ENCODE measurements at regions of chr12 and their contacts with region 1.

Region 1: GRCh38 chr12:50038336-50038735 is 13.0 kb upstream of the RACGAP1 start:
- DNase-seq: no peak
- ATAC-seq: no peak
- H3K4me3 ChIP-seq: no peak overlapping the region
- H3K27ac ChIP-seq: no peak overlapping the region
- H3K4me1 ChIP-seq: no peaks in the 10 kb centered on the region
- H3K27me3 ChIP-seq: no peaks in the 10 kb centered on the region
- CTCF ChIP-seq: no peak

Region 2: GRCh38 chr12:49961993-49962921 is 76.1 kb before region 1 on chr12:
- CTCF ChIA-PET with region 1: no interaction called
- POLR2A ChIA-PET with region 1: no interaction called
- in situ Hi-C with region 1: no loop called
- intact Hi-C with region 1: no loop called
- DNase-seq: no peak
- ATAC-seq: no peak
- H3K4me3 ChIP-seq: no peak overlapping the region
- H3K27ac ChIP-seq: no peak overlapping the region
- H3K4me1 ChIP-seq: peaks cover 33% of the 10 kb centered on the region
- H3K27me3 ChIP-seq: no peaks in the 10 kb centered on the region
- CTCF ChIP-seq: no peak

Region 3: DNA sequence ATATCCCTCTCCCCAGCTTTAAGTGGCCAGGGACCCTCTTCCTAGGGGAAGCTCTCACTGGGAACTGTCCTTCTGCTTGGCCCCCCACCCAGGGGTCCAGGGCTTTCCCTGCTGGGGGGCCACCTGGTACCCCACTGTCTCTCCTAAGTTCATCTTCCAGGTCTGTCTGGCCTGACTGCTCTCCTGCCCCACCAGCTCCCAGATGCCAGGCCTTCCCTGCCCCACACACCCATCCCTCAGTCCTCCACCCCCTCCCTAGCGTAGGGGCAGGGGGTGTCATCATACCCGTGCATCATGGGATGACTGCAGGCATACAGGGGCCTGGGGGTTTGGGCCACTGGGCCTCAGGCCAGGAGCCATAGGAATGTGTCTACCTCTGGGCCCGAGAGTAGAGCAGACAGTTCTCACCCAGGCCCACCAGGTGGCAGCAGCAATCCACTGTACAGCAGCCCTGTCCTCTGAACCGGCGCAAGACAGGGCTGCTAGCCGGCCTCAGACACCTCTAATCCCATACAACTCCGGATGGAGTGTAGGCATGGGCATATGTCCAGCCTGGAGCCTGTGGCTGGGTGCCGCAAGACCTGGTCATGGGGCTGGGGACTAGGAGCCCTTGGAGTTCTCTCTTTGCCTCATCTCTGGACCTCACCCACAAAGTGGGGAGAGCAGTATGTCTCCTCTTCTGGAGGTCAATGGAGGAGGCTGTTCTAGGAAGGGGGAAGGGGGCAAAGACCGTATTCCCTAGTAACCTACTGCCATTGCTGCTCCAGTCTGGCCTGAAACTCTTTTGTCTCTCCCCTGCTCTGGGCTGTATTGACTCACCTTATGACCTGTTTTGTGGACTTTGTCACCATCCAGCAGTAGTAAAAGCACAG is 36.8 kb after region 1 on chr12:
- CTCF ChIA-PET with region 1: interaction called, 10 read pairs
- POLR2A ChIA-PET with region 1: no interaction called
- in situ Hi-C with region 1: no loop called
- intact Hi-C with region 1: no loop called
- DNase-seq: no peak
- ATAC-seq: peak; percentile 93
- H3K4me3 ChIP-seq: no peak overlapping the region
- H3K27ac ChIP-seq: no peak overlapping the region
- H3K4me1 ChIP-seq: 0 out of 2 replicates have a peak, but pooled peaks cover 3% of the 10 kb centered on the region
- H3K27me3 ChIP-seq: no peaks in the 10 kb centered on the region
- CTCF ChIP-seq: peak; percentile 95